HEK293T (cell line): ENCODE measurements at regions of chr3 and their contacts with region 1.

Region 1: GRCh38 chr3:151439652-151440129 is 21.2 kb downstream of the IGSF10 start:
- DNase-seq: peak; percentile 54

Region 2: DNA sequence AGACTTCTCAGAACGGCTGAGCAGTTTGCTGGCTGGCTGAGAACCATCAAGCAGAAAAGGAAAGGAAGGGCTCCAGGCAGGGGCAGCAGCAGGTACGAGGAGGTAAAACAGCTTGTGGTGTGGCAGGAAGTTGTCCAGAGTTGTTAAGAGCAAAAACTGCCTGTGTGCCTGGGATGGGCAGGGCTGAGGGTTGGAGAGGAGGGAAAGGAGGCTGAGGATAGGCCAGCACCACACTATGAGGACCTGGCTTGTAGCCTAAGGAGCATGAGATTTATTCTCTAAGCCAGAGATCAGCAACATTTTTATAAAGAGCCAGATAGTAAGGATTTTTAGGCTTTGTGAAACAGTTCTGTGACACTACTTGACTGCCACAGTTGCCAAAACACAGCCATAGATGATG is 13.2 kb after region 1 on chr3:
- CTCF ChIA-PET with region 1: no interaction called
- POLR2A ChIA-PET with region 1: no interaction called
- DNase-seq: no peak

Region 3: GRCh38 chr3:151838583-151839312 is 399.1 kb after region 1 on chr3:
- CTCF ChIA-PET with region 1: interaction called, 17 read pairs
- POLR2A ChIA-PET with region 1: no interaction called
- DNase-seq: peak; percentile 57